A549 (cell line): ENCODE measurements at regions of chr5 and their contacts with region 1.

Region 1: DNA sequence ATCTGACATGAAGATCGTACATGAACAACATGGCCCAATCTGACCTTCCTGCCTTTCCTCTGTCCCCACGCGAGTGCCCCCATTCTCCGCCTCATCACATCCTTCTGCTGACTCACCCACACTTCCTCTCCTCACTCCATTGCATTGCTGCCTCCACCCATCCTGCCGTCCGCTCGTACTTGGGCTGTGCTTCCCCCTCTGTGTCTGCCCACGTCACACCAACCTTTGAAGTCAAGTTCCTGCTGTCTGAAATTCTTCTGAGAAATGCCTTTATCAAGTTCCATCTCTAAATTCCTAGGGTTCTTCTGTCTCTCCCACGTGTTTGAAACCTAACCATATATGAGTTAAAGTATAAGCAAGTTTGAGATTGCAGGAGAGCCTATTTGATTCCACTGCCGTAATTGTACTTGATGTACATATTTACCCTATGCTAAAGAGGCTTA is 18.0 kb upstream of the STARD4 start:
- DNase-seq: peak; percentile 43 to 90
- ATAC-seq: peak; percentile 96 to 97
- H3K4me3 ChIP-seq: no peak overlapping the region
- H3K27ac ChIP-seq: peak overlapping the region; percentile 26 to 69
- H3K4me1 ChIP-seq: no peaks in the 10 kb centered on the region
- CTCF ChIP-seq: no peak
- EP300 ChIP-seq: 0 out of 5 replicates have a peak, but pooled peaks of 1 of the 2 experiments have one; percentile 13
- POLR2A ChIP-seq: 0 out of 2 replicates have a peak, but pooled peaks have one; percentile 16
- RAD21 ChIP-seq: no peak

Region 2: GRCh38 chr5:111116550-111116949 is 413.8 kb before region 1 on chr5:
- CTCF ChIA-PET with region 1: no interaction called
- POLR2A ChIA-PET with region 1: no interaction called
- DNase-seq: no peak
- ATAC-seq: no peak
- H3K4me3 ChIP-seq: no peak overlapping the region
- H3K27ac ChIP-seq: no peak overlapping the region
- H3K4me1 ChIP-seq: no peaks in the 10 kb centered on the region
- CTCF ChIP-seq: no peak
- EP300 ChIP-seq: no peak
- POLR2A ChIP-seq: no peak
- RAD21 ChIP-seq: no peak

Region 3: GRCh38 chr5:111337688-111338087 is 192.6 kb before region 1 on chr5:
- CTCF ChIA-PET with region 1: no interaction called
- POLR2A ChIA-PET with region 1: no interaction called
- DNase-seq: no peak
- ATAC-seq: no peak
- H3K4me3 ChIP-seq: no peak overlapping the region
- H3K27ac ChIP-seq: no peak overlapping the region
- H3K4me1 ChIP-seq: no peaks in the 10 kb centered on the region
- CTCF ChIP-seq: no peak
- EP300 ChIP-seq: no peak
- POLR2A ChIP-seq: no peak
- RAD21 ChIP-seq: no peak

Region 4: GRCh38 chr5:111498346-111498745 is 32.0 kb before region 1 on chr5:
- CTCF ChIA-PET with region 1: interaction called, 11 read pairs
- POLR2A ChIA-PET with region 1: no interaction called
- DNase-seq: no peak
- ATAC-seq: no peak
- H3K4me3 ChIP-seq: no peak overlapping the region
- H3K27ac ChIP-seq: no peak overlapping the region
- H3K4me1 ChIP-seq: no peaks in the 10 kb centered on the region
- CTCF ChIP-seq: no peak
- EP300 ChIP-seq: no peak
- POLR2A ChIP-seq: no peak
- RAD21 ChIP-seq: no peak

Region 5: DNA sequence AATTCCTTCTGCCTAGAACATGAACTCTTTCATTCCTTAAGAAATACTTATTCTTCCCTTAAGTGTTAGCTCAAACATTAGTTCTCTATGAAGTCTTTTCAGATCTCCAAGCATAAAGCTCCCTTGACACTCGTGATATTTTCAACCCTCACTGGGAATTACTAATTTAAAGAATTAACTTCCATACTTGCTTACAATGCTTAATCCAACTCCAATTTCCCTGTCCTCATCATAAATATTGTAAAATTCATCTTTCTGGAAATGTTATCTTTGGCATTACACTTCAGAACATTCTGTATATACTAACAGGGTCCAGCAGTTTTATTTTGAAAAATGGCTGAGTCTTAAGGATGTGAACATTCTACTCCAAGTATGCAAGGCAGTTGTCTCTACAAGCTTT is 25.2 kb before region 1 on chr5:
- CTCF ChIA-PET with region 1: interaction called, 10 read pairs
- POLR2A ChIA-PET with region 1: no interaction called
- DNase-seq: no peak
- ATAC-seq: no peak
- H3K4me3 ChIP-seq: no peak overlapping the region
- H3K27ac ChIP-seq: no peak overlapping the region
- H3K4me1 ChIP-seq: no peaks in the 10 kb centered on the region
- CTCF ChIP-seq: no peak
- EP300 ChIP-seq: no peak
- POLR2A ChIP-seq: no peak
- RAD21 ChIP-seq: no peak

Region 6: GRCh38 chr5:111517853-111518501 is 12.3 kb before region 1 on chr5:
- CTCF ChIA-PET with region 1: interaction called, 11 read pairs
- POLR2A ChIA-PET with region 1: no interaction called
- DNase-seq: no peak
- ATAC-seq: no peak
- H3K4me3 ChIP-seq: no peak overlapping the region
- H3K27ac ChIP-seq: no peak overlapping the region
- H3K4me1 ChIP-seq: peaks cover 4% of the 10 kb centered on the region; the same call in 2 of the 3 replicates
- CTCF ChIP-seq: no peak
- EP300 ChIP-seq: no peak
- POLR2A ChIP-seq: no peak
- RAD21 ChIP-seq: no peak

Region 7: DNA sequence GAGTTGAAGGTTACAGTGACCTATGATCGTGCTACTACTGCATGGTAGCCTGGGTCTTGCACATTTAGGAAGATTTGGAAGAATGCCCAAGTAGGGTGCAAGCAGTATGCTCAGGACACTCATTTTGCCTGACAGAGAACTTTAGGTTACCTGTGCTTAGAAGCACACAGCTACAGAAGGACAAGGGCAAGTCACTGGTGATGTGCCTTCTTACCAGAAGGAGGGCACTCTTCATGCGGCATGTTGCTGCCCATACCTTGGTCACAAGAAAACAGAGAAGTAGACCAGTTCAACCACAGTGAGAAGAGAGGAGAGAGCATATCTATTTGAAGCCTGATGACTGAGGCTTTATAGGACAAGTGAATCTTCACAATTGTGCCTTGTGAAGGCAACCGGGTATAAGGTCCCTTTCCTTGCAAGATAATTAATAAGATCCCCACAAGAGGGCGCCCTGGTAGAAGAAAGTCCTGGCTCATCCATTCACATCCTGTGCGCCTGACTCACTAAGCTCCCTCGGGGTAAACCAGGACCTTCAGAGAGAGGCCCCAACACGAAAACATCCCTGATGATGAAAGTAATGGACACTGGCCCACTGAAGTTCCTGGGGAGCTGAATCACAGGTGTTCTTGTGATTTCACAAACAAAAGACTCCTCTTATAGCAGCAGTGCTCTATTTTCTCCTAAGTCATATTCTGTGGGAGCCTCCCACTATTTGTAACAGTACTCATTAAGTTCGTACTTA is 20.1 kb after region 1 on chr5:
- CTCF ChIA-PET with region 1: interaction called, 11 read pairs
- POLR2A ChIA-PET with region 1: no interaction called
- DNase-seq: peak; percentile 58 to 77
- ATAC-seq: peak; percentile 92 to 99
- H3K4me3 ChIP-seq: no peak overlapping the region
- H3K27ac ChIP-seq: 0 out of 6 replicates have a peak overlapping the region, but pooled peaks of 1 of the 2 experiments have one; percentile 11
- H3K4me1 ChIP-seq: peaks cover 3% of the 10 kb centered on the region; the same call in 2 of the 3 replicates
- CTCF ChIP-seq: peak; percentile 81
- EP300 ChIP-seq: no peak
- POLR2A ChIP-seq: no peak
- RAD21 ChIP-seq: peak; percentile 82 to 89

Region 8: GRCh38 chr5:112146323-112147226 is 616.3 kb after region 1 on chr5:
- CTCF ChIA-PET with region 1: interaction called, 11 read pairs
- POLR2A ChIA-PET with region 1: no interaction called
- DNase-seq: peak; percentile 48 to 73
- ATAC-seq: peak; percentile 96 to 99
- H3K4me3 ChIP-seq: no peak overlapping the region
- H3K27ac ChIP-seq: no peak overlapping the region
- H3K4me1 ChIP-seq: no peaks in the 10 kb centered on the region
- CTCF ChIP-seq: peak; percentile 92
- EP300 ChIP-seq: no peak
- POLR2A ChIP-seq: no peak
- RAD21 ChIP-seq: peak; percentile 94 to 96